OCI-LY7 (cell line): ENCODE measurements at regions of chr5 and their contacts with region 1.

Region 1: GRCh38 chr5:42994246-42995151 is 45.6 kb downstream of the ANXA2R start:
- DNase-seq: peak; percentile 92
- H3K4me3 ChIP-seq: peak overlapping the region; percentile 79
- H3K27ac ChIP-seq: peak overlapping the region; percentile 63
- H3K4me1 ChIP-seq: peaks cover 30% of the 10 kb centered on the region
- CTCF ChIP-seq: peak; percentile 86

Region 2: DNA sequence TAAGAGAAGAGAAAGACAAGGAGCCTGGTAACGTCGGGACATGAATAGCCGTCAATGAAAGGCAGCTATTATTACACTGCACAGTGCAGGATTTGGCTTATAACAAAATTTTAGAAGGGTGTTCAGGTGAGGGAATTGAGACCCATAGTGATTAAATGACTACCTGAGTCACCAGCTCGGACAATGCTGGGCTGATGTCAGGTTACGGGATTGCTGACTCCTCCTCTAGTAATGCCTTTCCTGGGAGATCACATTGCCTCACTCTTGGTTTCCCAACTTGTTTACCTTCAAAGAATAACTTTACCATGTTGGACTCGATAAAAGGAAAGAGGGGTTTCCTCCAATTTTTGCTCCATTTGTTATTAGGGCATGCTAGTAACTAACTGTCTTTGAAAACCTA is 438.7 kb before region 1 on chr5:
- CTCF ChIA-PET with region 1: no interaction called
- POLR2A ChIA-PET with region 1: no interaction called
- intact Hi-C with region 1: no loop called
- DNase-seq: no peak
- H3K4me3 ChIP-seq: no peak overlapping the region
- H3K27ac ChIP-seq: no peak overlapping the region
- H3K4me1 ChIP-seq: no peaks in the 10 kb centered on the region
- CTCF ChIP-seq: no peak

Region 3: DNA sequence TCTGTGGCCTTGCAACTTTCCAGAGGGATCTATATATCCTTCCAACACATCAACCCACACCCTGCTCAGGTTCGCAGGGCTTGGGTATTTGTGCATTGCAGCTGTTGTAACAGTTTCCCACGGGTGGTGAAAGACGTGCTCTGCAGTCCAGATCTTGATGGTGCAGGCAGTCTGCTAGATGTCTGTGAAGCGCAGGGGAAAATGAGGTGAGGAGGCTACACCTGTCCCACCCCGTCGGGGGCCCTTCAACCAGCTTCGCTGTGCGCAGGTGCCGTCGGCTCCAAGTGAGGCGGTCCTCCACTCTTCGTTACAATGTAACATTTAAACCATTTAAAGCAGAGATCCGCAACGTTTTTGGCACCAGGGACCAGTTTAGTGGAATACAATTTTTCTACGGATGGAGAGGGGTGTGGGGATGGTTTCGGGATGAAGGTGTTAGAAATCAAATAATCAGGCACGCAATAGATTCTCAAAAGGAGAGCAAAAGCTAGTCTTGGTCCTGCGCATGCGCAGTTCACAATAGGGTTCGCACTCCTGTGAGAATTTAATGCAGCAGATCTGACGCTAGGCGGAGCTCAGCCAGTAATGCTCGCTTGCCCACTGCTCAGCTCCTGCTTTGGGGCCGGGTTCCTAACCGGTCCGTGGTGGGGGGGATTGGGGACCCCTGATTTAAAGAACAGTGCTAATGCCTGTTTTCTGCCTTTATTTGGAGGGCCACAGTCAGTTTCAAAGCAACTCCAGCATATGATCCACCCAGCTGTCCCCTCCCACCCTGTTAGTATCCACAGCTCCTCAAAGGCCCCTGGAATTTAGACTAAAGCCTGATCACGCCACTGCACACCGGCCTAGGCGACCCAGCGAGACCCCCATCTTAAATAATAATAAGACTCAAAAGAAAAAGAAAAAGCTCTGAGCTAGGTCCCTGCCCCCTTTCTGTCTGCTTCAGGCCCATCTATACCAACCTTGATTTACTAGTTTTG is 85.7 kb before region 1 on chr5:
- CTCF ChIA-PET with region 1: no interaction called
- POLR2A ChIA-PET with region 1: interaction called, 3 read pairs
- intact Hi-C with region 1: loop called (anchors 5 kb)
- DNase-seq: peak; percentile 85
- H3K4me3 ChIP-seq: peak overlapping the region; percentile 20
- H3K27ac ChIP-seq: no peak overlapping the region
- H3K4me1 ChIP-seq: no peaks in the 10 kb centered on the region
- CTCF ChIP-seq: peak; percentile 76

Region 4: DNA sequence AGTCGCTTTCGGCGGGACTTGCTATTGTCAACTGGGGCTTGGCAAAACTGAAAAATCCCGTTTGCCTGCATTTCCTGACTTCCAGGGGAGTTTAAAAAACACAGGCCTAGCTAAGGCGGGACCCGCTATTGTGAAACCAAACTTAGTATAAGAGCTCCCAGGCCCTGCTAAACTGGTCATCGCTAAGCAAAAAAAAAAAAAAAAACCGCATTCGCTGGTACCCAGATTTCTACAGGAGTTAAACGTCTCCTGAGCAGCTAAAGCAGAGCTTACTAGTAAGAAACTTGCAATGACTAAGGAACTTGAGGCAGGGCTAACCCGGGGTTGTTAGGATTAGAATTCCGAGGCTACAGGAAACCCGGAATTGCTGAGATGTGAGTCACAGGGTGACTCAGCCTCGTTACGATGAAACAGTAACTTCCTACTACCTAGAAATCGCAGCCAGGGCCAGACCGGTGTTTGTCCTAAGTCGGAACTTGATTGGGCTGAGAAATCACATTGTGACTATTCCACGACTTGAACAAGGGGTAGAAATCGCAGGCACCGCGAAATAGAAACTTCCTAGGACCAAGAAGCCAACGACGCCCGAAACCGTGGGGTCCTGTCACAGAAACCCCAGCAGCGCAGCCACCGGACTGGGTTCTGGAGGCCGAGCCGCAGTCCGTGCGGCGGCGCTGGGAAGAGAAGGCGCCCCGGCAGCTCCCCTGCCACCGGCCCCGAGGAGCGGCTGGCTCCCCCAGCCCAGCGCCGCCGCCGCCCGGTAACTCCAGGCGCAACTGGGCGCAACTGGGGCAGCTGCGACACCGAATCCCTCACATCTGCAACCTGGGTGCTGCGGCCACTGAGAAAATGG is 43.8 kb before region 1 on chr5:
- CTCF ChIA-PET with region 1: no interaction called
- POLR2A ChIA-PET with region 1: interaction called, 6 read pairs
- intact Hi-C with region 1: loop called (anchors 2 kb)
- DNase-seq: peak; percentile 36
- H3K4me3 ChIP-seq: peak overlapping the region; percentile 68
- H3K27ac ChIP-seq: no peak overlapping the region
- H3K4me1 ChIP-seq: peaks cover 28% of the 10 kb centered on the region
- CTCF ChIP-seq: no peak

Region 5: GRCh38 chr5:42962124-42962523 is 32.4 kb before region 1 on chr5:
- CTCF ChIA-PET with region 1: no interaction called
- POLR2A ChIA-PET with region 1: no interaction called
- intact Hi-C with region 1: no loop called
- DNase-seq: no peak
- H3K4me3 ChIP-seq: no peak overlapping the region
- H3K27ac ChIP-seq: no peak overlapping the region
- H3K4me1 ChIP-seq: no peaks in the 10 kb centered on the region
- CTCF ChIP-seq: no peak

Region 6: DNA sequence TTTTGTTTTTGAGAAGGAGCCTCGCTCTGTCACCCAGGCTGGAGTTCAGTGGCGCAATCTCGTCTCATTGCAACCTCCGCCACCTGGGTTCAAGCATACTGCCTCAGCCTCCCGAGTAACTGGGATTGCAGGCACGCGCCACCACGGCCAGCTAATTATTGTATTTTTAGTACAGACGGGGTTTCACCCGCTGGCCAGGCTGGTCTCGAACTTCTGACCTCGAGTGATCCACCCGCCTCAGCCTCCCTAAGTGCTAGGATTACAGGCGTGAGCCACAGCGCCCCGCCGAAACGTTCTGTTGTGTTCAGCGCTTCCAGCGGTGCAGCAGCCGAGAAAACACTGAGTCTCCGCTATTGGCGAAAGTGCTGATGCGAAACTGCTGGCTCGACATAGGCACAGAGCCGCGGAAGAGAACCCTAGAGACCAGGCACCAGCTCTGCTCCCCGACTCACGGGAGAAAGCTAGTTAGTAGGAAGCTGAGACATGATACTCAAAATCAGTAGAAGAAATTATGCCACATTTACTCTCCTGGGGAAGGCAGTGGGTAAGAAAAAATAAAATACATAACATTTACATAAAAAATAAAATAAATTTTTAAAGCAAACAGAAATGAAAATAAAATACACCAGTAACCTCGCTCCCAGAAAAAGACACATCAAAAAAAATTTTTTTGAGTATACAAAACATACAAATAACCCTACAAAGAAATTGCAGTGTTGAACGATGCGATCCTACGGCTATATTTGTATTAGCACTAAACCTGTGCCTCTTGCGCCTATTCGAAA is 14.1 kb after region 1 on chr5:
- CTCF ChIA-PET with region 1: interaction called, 3 read pairs
- POLR2A ChIA-PET with region 1: interaction called, 71 read pairs
- intact Hi-C with region 1: loop called (anchors 1 kb)
- DNase-seq: peak; percentile 96
- H3K4me3 ChIP-seq: peak overlapping the region; percentile 70
- H3K27ac ChIP-seq: peak overlapping the region; percentile 86
- H3K4me1 ChIP-seq: peaks cover 32% of the 10 kb centered on the region
- CTCF ChIP-seq: peak; percentile 66

Region 7: DNA sequence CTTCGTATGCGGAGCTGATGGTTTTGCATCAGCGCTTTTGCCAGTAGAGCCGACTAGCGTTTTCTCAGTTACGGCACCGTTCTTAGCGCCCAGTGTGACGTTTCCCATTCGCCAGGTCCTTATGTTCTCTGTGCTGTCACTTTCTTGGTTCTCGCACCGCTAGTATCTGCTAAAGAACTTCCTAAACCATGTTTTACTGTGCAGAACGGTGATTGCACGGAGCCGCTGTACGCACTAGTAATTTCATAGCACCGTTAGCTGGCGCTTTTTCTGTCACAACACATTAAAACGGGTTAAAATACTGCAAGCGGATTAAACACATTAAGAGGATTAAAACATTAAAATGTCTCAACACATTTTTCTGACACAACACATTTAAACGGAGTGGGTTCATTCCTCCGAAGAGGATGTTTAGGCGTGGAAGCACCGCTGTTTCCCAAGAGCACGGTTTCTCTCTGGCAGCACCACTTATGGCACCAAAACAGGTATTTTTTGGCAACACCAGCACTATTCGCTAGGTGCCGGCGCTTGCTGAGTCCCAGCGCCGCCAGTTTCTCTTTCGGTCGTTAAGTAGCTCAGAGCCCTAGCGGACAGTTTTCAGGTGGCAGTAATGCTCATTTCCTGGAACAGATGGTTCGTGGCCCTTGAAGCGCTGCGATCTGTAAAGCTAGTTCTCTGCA is 25.3 kb after region 1 on chr5:
- CTCF ChIA-PET with region 1: interaction called, 4 read pairs
- POLR2A ChIA-PET with region 1: interaction called, 9 read pairs
- intact Hi-C with region 1: loop called (anchors 1 kb)
- DNase-seq: peak; percentile 95
- H3K4me3 ChIP-seq: peak overlapping the region; percentile 76
- H3K27ac ChIP-seq: peak overlapping the region; percentile 93
- H3K4me1 ChIP-seq: peaks cover 40% of the 10 kb centered on the region
- CTCF ChIP-seq: peak; percentile 73

Region 8: GRCh38 chr5:43066799-43067741 is 72.6 kb after region 1 on chr5:
- CTCF ChIA-PET with region 1: no interaction called
- POLR2A ChIA-PET with region 1: interaction called, 3 read pairs
- intact Hi-C with region 1: loop called (anchors 1 kb)
- DNase-seq: peak; percentile 93
- H3K4me3 ChIP-seq: peak overlapping the region; percentile 85
- H3K27ac ChIP-seq: peak overlapping the region; percentile 92
- H3K4me1 ChIP-seq: peaks cover 29% of the 10 kb centered on the region
- CTCF ChIP-seq: no peak

Region 9: DNA sequence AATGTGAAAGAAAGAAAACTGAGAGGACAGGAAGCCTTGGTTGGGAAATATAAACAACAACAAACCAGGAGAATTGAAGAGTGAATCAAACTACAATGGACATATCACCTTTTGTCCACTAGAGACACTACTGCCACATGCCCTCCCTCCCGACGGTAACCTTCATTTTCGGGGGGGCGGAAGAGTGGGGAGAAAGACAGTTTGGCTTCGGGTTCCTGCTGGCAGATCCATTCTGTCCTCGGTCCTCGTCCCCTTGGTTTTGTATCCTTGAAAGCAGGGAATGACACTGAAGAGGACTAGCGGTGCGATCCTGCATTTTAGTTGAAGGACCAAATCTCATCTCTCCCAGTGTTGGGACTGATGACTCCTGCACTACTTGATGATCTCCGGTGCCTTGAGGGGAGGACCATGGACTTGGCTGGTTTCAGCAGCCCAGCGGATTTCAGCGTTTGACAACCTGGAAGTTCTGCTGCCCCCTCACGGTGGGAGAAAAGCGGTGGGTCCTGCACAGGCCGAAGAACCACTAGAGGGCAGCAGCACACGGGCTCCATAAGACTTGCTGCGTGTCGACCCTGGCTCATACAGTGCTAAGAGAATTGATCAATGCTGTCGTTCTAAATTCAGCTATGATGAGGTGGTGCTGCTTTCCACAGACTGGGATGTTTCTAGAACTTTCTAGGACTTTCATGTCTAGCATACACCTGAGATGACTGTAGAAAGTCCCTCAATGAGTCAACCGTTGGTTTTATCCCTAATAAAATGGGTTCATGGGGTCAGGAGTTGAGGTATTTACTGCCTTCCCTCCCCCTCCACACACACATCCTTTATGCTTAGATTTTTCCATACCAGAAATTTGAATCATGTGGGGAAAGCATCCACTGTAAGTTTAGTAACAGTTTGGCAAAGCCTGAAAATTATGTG is 111.1 kb after region 1 on chr5:
- CTCF ChIA-PET with region 1: no interaction called
- POLR2A ChIA-PET with region 1: no interaction called
- intact Hi-C with region 1: no loop called
- DNase-seq: peak; percentile 93
- H3K4me3 ChIP-seq: peak overlapping the region; percentile 65
- H3K27ac ChIP-seq: peak overlapping the region; percentile 20
- H3K4me1 ChIP-seq: peaks cover 4% of the 10 kb centered on the region
- CTCF ChIP-seq: peak; percentile 100